Right ventricle myocardium superior (tissue), 1 donor: ENCODE measurements at regions of chr16 and their contacts with region 1.

Region 1: GRCh38 chr16:56608043-56608875 is at the start of gene MT2A:
- DNase-seq: peak; percentile 98
- ATAC-seq: peak; percentile 84
- total RNA-seq, gene MT2A: 87.9 TPM

Region 2: DNA sequence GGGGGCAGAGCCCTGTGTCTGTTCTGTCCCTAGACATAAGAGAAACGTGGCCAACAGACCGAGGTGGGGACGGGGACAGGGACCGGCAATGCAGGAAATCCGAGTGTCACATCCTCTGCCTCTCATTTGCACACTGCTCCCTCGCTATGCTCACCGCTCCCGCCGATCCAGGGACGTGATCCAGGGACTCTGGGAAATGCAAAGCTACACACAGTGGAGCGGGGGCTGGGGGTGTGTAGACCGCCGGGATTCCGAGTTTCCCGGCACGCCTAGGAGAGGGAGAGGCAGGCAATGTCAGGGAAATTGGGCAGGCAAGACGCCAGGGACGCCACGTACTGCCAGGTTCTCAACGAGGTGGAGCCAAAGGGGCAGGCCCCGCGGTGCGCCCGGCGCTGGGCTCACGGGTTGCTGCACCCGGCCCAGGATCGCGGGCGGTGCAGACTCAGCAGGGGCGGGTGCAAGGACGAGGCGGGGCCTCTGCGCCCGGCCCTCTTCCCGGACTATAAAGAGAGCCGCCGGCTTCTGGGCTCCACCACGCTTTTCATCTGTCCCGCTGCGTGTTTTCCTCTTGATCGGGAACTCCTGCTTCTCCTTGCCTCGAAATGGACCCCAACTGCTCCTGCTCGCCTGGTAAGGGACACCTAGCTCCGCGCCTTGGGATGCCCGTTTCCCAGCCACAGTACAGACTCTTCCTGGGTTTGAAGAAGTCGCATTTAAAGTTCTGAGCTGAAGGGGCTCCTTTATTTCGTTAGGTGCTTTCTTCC is 73.9 kb after region 1 on chr16 and contains the start of gene MT1X:
- intact Hi-C with region 1: loop called (anchors 2 kb)
- DNase-seq: peak; percentile 97
- ATAC-seq: peak; percentile 95
- total RNA-seq, gene MT1X: 105 TPM